HepG2 (cell line): ENCODE measurements at regions of chr4 and their contacts with region 1.

Region 1: GRCh38 chr4:43132010-43132582 is 239.6 kb downstream of the GRXCR1 start:
- DNase-seq: peak; percentile 42
- ATAC-seq: peak; percentile 75
- H3K4me3 ChIP-seq: no peak overlapping the region
- H3K27ac ChIP-seq: no peak overlapping the region
- H3K4me1 ChIP-seq: no peaks in the 10 kb centered on the region
- H3K27me3 ChIP-seq: no peaks in the 10 kb centered on the region
- CTCF ChIP-seq: peak; percentile 78
- EP300 ChIP-seq: no peak
- POLR2A ChIP-seq: no peak
- RAD21 ChIP-seq: peak; percentile 34; the same call in 1 of the 2 replicates

Region 2: GRCh38 chr4:42543762-42544161 is 588.3 kb before region 1 on chr4:
- CTCF ChIA-PET with region 1: no interaction called
- POLR2A ChIA-PET with region 1: no interaction called
- in situ Hi-C with region 1: no loop called
- intact Hi-C with region 1: no loop called
- DNase-seq: no peak
- ATAC-seq: no peak
- H3K4me3 ChIP-seq: no peak overlapping the region
- H3K27ac ChIP-seq: no peak overlapping the region
- H3K4me1 ChIP-seq: no peaks in the 10 kb centered on the region
- H3K27me3 ChIP-seq: no peaks in the 10 kb centered on the region
- CTCF ChIP-seq: no peak
- EP300 ChIP-seq: no peak
- POLR2A ChIP-seq: no peak
- RAD21 ChIP-seq: no peak

Region 3: DNA sequence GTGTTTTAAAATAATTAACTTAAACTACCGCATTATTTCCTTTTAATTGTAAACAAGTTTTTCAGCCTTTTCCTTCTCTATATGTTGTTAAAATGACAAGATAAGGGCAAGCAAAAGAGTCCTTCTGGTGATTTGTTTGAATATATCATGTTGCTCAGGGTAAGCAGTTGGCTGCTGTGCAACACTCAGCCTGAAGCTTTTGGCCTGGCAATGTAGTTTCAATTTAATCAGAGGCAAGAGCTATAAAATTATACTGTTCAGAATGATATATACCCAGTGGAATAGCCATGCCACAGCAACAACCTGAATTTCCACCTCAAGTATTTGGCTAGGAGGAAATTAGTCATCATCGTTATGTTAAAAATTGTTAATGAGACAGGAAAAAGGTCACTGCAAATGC is 186.2 kb before region 1 on chr4:
- CTCF ChIA-PET with region 1: no interaction called
- POLR2A ChIA-PET with region 1: no interaction called
- in situ Hi-C with region 1: no loop called
- intact Hi-C with region 1: no loop called
- DNase-seq: no peak
- ATAC-seq: no peak
- H3K4me3 ChIP-seq: no peak overlapping the region
- H3K27ac ChIP-seq: no peak overlapping the region
- H3K4me1 ChIP-seq: no peaks in the 10 kb centered on the region
- H3K27me3 ChIP-seq: no peaks in the 10 kb centered on the region
- CTCF ChIP-seq: no peak
- EP300 ChIP-seq: no peak
- POLR2A ChIP-seq: no peak
- RAD21 ChIP-seq: no peak

Region 4: GRCh38 chr4:43456383-43456782 is 324.3 kb after region 1 on chr4:
- CTCF ChIA-PET with region 1: no interaction called
- POLR2A ChIA-PET with region 1: no interaction called
- in situ Hi-C with region 1: loop called (anchors 25 kb)
- intact Hi-C with region 1: no loop called
- DNase-seq: no peak
- ATAC-seq: no peak
- H3K4me3 ChIP-seq: no peak overlapping the region
- H3K27ac ChIP-seq: no peak overlapping the region
- H3K4me1 ChIP-seq: no peaks in the 10 kb centered on the region
- H3K27me3 ChIP-seq: no peaks in the 10 kb centered on the region
- CTCF ChIP-seq: no peak
- EP300 ChIP-seq: no peak
- POLR2A ChIP-seq: no peak
- RAD21 ChIP-seq: no peak

Region 5: GRCh38 chr4:43471950-43472349 is 339.9 kb after region 1 on chr4:
- CTCF ChIA-PET with region 1: interaction called, 8 read pairs
- POLR2A ChIA-PET with region 1: no interaction called
- in situ Hi-C with region 1: loop called (anchors 25 kb)
- intact Hi-C with region 1: loop called (anchors 1 kb)
- DNase-seq: peak; percentile 30
- ATAC-seq: peak; percentile 80
- H3K4me3 ChIP-seq: peak overlapping the region in 2 of 3 experiments; percentile 32 to 41; a peak in 4 of 6 replicates
- H3K27ac ChIP-seq: no peak overlapping the region
- H3K4me1 ChIP-seq: no peaks in the 10 kb centered on the region
- H3K27me3 ChIP-seq: no peaks in the 10 kb centered on the region
- CTCF ChIP-seq: peak; percentile 53
- EP300 ChIP-seq: no peak
- POLR2A ChIP-seq: no peak
- RAD21 ChIP-seq: no peak

Region 6: GRCh38 chr4:43882470-43882869 is 750.4 kb after region 1 on chr4:
- CTCF ChIA-PET with region 1: no interaction called
- POLR2A ChIA-PET with region 1: no interaction called
- in situ Hi-C with region 1: no loop called
- intact Hi-C with region 1: loop called (anchors 5 kb)
- DNase-seq: no peak
- ATAC-seq: no peak
- H3K4me3 ChIP-seq: no peak overlapping the region
- H3K27ac ChIP-seq: no peak overlapping the region
- H3K4me1 ChIP-seq: no peaks in the 10 kb centered on the region
- H3K27me3 ChIP-seq: no peaks in the 10 kb centered on the region
- CTCF ChIP-seq: no peak
- EP300 ChIP-seq: no peak
- POLR2A ChIP-seq: no peak
- RAD21 ChIP-seq: no peak

Region 7: DNA sequence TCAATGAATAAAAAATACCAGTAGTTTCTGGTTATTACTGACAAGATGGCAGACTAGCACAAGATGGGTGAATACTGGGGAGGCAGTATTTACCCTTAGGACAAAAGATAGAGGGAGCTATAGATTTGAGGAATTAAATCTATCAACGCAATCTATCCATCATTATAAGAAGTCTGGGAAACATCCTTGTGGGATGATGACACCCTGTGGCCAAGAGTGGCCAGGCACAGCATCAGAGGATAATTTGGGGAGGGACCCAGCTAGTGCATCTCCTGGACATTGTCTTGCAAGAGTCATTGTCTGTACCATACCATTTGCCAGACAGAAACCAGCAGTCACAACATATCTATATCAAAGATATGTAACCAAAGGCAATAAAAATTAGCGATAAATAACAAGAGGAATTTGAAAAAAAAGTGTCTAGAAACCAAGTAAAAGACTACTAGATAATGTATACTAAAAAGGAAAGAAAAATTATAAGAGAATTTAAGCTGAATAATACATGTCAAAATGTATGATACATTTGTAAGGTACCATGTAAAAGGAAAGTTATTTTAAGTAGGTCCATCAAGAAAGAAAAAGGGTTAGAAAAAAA is 1293.6 kb after region 1 on chr4:
- CTCF ChIA-PET with region 1: no interaction called
- POLR2A ChIA-PET with region 1: no interaction called
- in situ Hi-C with region 1: no loop called
- intact Hi-C with region 1: loop called (anchors 5 kb)
- DNase-seq: no peak
- ATAC-seq: peak; percentile 47; the same call in 2 of the 3 replicates
- H3K4me3 ChIP-seq: no peak overlapping the region
- H3K27ac ChIP-seq: no peak overlapping the region
- H3K4me1 ChIP-seq: no peaks in the 10 kb centered on the region
- H3K27me3 ChIP-seq: no peaks in the 10 kb centered on the region
- CTCF ChIP-seq: peak; percentile 28; the same call in 1 of the 2 replicates
- EP300 ChIP-seq: no peak
- POLR2A ChIP-seq: no peak
- RAD21 ChIP-seq: no peak

Region 8: DNA sequence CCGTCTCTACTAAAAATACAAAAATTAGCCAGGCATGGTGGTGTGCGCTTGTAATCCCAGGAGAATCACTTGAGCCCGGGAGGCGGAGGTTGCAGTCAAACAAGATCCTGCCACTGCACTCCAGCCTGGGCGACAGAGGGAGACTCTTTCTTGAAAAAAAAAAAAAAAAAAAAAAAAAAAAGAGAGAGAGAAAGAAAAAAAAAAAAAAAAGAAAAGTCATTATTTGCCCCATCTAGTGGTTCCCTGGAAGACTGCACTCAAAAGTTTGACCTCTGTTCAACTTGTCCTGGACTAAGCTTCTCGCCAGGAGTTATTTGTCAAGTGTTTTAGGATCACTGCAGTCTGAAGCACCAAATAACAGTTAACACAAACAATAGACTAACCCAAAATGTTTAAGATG is 1361.8 kb after region 1 on chr4:
- CTCF ChIA-PET with region 1: interaction called, 5 read pairs
- POLR2A ChIA-PET with region 1: no interaction called
- in situ Hi-C with region 1: no loop called
- intact Hi-C with region 1: loop called (anchors 5 kb)
- DNase-seq: peak; percentile 20
- ATAC-seq: peak; percentile 82
- H3K4me3 ChIP-seq: no peak overlapping the region
- H3K27ac ChIP-seq: no peak overlapping the region
- H3K4me1 ChIP-seq: no peaks in the 10 kb centered on the region
- H3K27me3 ChIP-seq: no peaks in the 10 kb centered on the region
- CTCF ChIP-seq: peak; percentile 20; the same call in 1 of the 2 replicates
- EP300 ChIP-seq: no peak
- POLR2A ChIP-seq: no peak
- RAD21 ChIP-seq: no peak

Region 9: DNA sequence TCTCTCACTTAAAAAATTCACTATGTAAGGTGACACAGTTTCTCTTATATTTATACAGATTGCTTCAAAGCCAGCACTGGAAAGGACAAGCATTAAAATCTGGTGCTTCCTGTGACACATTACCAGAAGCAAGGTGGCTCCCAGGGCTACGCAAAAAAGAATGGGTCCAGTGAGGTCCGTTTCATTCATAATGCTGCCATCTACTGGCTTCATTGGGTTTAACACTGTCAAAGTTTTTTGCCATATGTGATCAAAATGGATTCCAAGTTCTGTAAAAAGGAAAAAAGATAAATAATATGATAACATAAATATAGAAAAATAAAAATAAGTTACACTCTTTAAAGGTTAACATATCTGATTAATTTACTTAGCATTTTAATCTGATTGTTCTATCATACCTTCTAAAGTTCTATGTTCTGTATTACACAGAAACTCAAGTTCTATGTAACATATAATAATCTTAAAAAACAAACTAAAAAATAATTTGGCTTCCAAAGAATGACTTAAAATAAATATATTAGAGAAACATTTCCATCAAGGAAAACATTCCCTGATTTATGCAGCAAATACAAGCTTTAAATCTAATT is 1497.3 kb after region 1 on chr4:
- CTCF ChIA-PET with region 1: interaction called, 5 read pairs
- POLR2A ChIA-PET with region 1: no interaction called
- in situ Hi-C with region 1: loop called (anchors 25 kb)
- intact Hi-C with region 1: loop called (anchors 2 kb)
- DNase-seq: peak; percentile 41
- ATAC-seq: peak; percentile 85
- H3K4me3 ChIP-seq: no peak overlapping the region
- H3K27ac ChIP-seq: no peak overlapping the region
- H3K4me1 ChIP-seq: no peaks in the 10 kb centered on the region
- H3K27me3 ChIP-seq: no peaks in the 10 kb centered on the region
- CTCF ChIP-seq: peak; percentile 69
- EP300 ChIP-seq: no peak
- POLR2A ChIP-seq: no peak
- RAD21 ChIP-seq: no peak